Left cardiac atrium (tissue), 4 donors: ENCODE measurements at regions of chrX and their contacts with region 1.

Region 1: DNA sequence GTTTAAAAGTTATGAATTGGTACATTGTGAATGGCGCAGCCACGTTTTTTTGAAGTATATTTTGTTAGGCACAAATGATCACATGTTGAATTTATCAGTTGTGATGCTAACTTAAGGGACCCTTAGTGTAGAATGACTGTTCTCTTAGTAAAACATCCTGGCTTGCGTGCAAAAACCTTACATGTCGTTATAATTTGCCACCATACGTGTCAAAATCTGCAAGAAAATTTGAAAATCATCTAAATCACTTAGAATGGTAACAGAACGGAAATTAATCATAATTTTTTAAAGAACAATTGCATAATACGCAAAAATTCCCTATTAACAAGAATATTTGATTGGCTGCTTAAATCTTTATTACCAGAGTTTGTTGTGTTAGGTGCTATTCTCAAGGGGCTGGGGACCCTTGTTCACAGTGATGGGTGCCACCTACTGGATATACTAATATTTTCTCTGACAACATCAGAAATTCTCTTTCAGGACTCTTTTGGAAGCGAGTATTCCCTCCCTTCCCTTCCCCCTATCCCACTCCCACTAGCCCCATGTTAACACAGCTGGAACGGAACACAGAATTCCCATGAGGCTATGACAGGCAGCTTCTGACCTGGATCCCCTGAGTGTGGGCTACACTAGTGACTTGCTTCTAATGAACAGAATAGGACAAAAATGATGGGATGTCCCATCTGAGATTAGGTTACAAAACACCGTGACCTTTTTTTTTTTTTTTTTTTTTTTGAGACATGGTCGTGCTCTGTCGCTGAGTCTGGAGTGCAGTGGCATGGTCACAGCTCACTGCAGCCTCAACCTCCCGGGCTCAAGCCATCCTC is 71.8 kb downstream of the SUPT20HL2 start:
- DNase-seq: no peak
- ATAC-seq: peak; percentile 39 to 53

Region 2: GRCh38 chrX:24081661-24082264 is 160.3 kb before region 1 on chrX:
- intact Hi-C with region 1: loop called (anchors 5 kb)
- DNase-seq: peak; percentile 46
- ATAC-seq: peak; percentile 55 to 68

Region 3: DNA sequence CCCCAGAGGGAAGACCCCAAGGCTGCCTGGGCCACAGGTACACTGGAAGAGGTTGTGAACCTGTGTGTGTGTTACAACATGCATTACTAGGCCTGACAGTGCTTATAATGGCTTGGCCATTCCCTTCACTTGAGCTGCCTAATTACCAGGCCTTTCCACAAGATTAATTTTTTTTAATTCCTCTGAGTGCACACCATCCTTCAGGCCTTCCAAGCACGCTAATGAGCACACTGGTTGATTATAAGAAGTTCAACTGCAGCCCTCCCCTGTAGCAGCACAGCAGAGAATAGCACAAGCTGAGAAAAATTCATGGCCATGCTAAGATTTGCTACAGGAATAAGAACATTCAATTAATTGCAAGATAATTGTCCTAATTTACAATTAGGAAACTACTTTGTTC is 74.1 kb after region 1 on chrX:
- intact Hi-C with region 1: no loop called
- DNase-seq: no peak
- ATAC-seq: no peak

Region 4: DNA sequence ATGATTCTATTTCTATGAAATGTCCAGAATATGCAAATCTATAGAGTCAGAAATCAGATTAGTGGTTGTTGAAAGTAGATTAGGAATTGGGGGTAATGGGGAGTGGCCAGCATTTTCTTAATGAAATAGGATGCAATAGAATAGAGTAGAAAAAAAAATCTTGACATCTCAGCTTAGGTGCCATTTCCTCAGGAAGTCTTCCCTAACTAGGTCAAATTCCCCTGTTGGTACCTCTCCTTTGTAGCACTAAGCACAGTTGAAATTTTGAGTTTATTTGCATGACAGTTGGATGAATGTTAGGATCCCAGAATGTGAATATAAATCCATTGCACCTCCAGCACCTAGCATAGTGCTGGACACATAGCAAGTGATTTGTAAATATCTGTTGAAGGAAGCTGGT is 193.0 kb after region 1 on chrX:
- intact Hi-C with region 1: no loop called
- DNase-seq: no peak
- ATAC-seq: no peak